Activated CD4-positive, alpha-beta T cell treated with anti-CD3 and anti-CD28 coated beads, Interleukin-2, amount 10 ng/mL, durations not matched to agents 24 days and 14 days (primary cell): ENCODE measurements at regions of chr17 and their contacts with region 1.

Region 1: DNA sequence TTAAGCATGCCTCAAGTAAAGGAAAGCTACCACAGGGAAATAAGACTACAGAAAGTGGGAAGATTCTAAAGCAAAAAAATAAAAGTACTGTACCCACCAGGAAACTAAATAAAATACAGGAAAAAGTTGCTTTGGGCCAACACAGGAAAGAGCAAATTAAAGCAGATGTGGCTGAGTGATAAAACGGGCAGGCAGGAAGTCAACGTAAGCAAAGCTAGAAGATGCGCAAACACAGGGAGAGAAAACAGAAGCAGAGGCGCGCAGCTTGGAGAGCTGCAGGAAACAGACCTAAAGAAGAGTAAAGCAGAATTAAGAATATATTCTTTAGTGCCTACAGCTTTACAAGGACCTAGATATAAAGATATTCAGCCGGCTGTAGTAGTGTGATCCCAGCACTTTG is 21.7 kb downstream of the USP36 start:
- DNase-seq: peak; percentile 91
- H3K4me3 Mint-ChIP-seq: peak overlapping the region; percentile 70
- H3K27ac Mint-ChIP-seq: peak overlapping the region; percentile 79
- H3K4me1 Mint-ChIP-seq: peaks cover 54% of the 10 kb centered on the region
- H3K27me3 Mint-ChIP-seq: no peaks in the 10 kb centered on the region

Region 2: GRCh38 chr17:78798695-78799559 is 20.0 kb before region 1 on chr17:
- intact Hi-C with region 1: no loop called
- DNase-seq: peak; percentile 76
- H3K4me3 Mint-ChIP-seq: peak overlapping the region; percentile 48
- H3K27ac Mint-ChIP-seq: peak overlapping the region; percentile 89
- H3K4me1 Mint-ChIP-seq: peaks cover 43% of the 10 kb centered on the region
- H3K27me3 Mint-ChIP-seq: no peaks in the 10 kb centered on the region

Region 3: DNA sequence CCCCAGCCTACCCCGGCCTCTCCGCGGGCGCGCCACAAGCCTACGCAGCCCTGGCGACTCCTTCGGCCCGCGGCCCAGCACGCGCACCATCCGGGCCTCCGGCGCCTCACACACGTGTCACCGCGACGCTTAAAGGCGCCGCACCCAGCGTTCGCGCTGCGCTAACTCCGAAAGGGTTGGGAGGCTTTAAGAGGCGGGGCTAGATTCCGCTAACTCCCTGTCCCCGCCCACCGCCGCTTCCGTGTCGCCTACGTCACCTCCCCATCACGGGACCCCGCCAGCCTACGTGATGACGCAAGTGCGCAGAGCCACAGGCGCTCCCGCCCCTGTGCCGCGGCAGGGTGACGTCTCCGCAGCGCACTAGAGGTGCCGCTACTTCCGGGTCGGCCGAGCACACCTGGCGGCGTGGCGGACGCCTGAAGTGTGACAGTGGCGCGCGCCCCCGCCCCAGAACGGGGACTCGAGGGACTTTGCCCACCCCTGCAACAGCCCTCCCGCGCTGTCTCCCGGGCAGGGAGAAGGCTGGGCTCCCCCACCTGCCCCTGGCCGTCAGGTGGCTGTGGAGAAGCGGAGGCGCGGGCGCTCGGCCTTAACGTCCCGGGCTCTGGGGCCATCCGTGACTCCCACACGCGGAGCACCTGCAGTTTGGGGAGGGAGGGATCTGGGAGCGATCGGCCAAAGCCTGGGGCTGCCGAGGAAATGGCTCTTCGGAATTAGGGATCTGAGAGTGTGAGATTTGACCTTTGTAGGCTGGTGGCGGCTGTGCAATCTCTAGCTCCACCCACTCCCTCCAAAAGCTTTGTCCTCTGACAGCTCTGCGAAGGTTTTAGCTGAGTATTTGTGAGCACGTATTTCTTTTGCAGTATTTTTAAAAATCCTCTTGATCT is 22.0 kb after region 1 on chr17 and contains the start of gene USP36:
- intact Hi-C with region 1: loop called (anchors 1 kb)
- DNase-seq: peak; percentile 100
- H3K4me3 Mint-ChIP-seq: peak within 1 kb of the TSS; percentile 87
- H3K27ac Mint-ChIP-seq: peak within 1 kb of the TSS; percentile 94
- H3K4me1 Mint-ChIP-seq: peaks cover 31% of the 10 kb centered on the region
- H3K27me3 Mint-ChIP-seq: no peaks in the 10 kb centered on the region
- total RNA-seq, gene USP36: 128 TPM in 2 replicates

Region 4: DNA sequence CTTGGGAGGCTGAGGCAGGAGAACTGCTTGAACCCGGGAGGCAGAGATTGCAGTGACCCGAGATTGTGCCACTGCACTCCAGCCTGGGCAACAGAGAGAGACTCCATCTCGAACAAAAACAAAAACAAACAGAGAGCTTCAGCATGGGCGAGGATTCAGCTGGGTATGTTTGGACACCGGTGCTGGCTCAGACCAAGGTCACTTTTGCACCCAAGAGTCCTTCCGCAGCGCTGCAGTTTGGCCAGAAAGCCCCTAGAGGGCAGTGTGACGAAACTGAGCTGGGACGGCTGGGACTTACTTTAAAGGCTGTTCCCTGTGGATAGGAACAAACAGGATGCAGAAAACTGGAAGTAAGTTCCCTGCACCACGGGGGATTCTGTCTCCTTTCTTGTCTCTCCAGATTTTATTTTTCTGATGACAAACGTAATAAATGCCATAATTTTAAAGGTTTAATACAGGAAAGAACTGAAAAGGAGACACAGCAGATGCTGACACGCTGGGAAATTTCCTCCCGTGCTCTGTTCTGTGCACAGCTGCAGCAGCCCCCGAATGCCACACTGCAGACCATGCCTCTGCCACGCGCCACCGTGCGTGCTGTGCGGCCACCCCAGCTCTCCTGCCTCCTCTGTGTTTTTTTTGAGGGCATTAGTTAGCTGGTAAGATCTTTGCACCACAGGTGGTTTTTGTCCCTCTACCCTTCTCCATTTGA is 46.9 kb after region 1 on chr17:
- intact Hi-C with region 1: no loop called
- DNase-seq: peak; percentile 92
- H3K4me3 Mint-ChIP-seq: no peak overlapping the region
- H3K27ac Mint-ChIP-seq: no peak overlapping the region
- H3K4me1 Mint-ChIP-seq: peaks cover 2% of the 10 kb centered on the region
- H3K27me3 Mint-ChIP-seq: peaks cover 8% of the 10 kb centered on the region